PC-3 (cell line): ENCODE measurements at regions of chr11 and their contacts with region 1.

Region 1: DNA sequence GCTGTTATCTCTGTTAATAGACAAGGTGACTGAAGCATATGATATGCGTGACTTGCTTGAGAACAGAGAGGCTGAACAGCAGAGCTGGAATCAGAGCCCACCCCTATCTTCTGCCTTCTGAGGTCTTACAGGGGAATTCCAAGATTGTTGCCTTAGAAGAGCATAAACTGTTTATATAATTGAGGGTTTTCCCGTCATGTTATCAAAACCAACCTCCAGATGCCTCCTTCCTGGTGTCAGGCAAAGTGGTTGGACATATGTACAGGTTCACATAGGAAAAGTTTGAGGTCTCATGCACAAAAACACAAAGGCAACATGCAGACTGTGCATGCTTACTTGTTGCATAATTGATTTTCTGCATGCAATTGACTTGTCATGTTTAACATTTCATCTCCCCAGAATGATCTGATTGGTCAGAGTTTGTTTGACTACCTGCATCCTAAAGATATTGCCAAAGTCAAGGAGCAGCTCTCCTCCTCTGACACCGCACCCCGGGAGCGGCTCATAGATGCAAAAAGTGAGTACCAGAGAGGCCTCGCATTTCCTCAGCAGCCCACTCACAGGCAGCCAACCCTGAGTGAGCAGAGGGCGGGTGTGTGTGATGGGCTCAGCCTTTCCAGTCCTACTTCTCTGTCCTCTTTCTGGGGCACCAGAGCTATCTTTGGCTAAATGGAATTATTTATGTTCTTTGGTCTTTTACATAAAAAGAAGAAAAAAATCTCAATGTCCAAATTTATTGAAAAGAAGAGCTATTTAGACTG is 88.9 kb downstream of the BMAL1 start:
- DNase-seq: no peak
- ATAC-seq: no peak
- H3K4me3 ChIP-seq: no peak overlapping the region
- H3K27ac ChIP-seq: no peak overlapping the region
- H3K4me1 ChIP-seq: no peaks in the 10 kb centered on the region
- H3K27me3 ChIP-seq: no peaks in the 10 kb centered on the region
- CTCF ChIP-seq: no peak

Region 2: DNA sequence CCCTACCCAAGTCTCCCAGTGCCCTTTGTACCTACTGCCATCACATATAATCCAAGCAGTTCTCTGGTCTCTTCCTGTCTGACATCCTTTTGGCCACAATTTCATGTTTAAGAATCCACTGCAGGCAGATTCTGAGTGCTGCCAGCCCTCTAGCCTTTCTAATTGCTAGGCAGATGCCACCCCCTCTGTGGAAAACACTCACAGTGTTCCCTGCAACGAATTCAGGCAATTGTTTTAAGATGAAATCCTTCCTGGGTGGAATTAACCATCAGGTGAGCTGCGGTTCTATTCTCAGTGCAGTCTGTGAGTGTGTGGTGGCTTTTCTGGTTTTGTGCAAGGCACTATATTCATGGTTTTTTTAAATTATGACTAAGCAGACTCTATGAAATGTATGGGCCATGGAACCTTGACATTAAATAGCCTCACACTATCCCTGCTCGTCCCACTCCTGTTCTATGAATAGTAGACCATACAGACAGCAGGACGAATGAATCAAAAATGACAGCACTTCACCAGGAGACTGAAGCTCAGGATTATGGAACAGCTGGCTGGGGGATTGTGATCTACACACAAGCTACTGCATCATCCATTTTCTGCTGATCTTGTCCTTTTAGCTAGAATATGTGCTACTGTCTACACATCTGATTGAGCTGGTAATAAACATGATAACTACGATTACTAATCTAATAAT is 118.7 kb before region 1 on chr11:
- CTCF ChIA-PET with region 1: no interaction called
- POLR2A ChIA-PET with region 1: no interaction called
- intact Hi-C with region 1: no loop called
- DNase-seq: no peak
- ATAC-seq: no peak
- H3K4me3 ChIP-seq: no peak overlapping the region
- H3K27ac ChIP-seq: no peak overlapping the region
- H3K4me1 ChIP-seq: peaks cover 9% of the 10 kb centered on the region
- H3K27me3 ChIP-seq: no peaks in the 10 kb centered on the region
- CTCF ChIP-seq: no peak

Region 3: GRCh38 chr11:14835491-14836105 is 1469.2 kb after region 1 on chr11:
- CTCF ChIA-PET with region 1: no interaction called
- POLR2A ChIA-PET with region 1: interaction called, 10 read pairs
- intact Hi-C with region 1: no loop called
- DNase-seq: no peak
- ATAC-seq: peak; percentile 42; the same call in 1 of the 2 replicates
- H3K4me3 ChIP-seq: no peak overlapping the region
- H3K27ac ChIP-seq: no peak overlapping the region
- H3K4me1 ChIP-seq: no peaks in the 10 kb centered on the region
- H3K27me3 ChIP-seq: no peaks in the 10 kb centered on the region
- CTCF ChIP-seq: no peak